ENCODE measurements at regions of chr3 and their contacts with region 1.

Region 1: DNA sequence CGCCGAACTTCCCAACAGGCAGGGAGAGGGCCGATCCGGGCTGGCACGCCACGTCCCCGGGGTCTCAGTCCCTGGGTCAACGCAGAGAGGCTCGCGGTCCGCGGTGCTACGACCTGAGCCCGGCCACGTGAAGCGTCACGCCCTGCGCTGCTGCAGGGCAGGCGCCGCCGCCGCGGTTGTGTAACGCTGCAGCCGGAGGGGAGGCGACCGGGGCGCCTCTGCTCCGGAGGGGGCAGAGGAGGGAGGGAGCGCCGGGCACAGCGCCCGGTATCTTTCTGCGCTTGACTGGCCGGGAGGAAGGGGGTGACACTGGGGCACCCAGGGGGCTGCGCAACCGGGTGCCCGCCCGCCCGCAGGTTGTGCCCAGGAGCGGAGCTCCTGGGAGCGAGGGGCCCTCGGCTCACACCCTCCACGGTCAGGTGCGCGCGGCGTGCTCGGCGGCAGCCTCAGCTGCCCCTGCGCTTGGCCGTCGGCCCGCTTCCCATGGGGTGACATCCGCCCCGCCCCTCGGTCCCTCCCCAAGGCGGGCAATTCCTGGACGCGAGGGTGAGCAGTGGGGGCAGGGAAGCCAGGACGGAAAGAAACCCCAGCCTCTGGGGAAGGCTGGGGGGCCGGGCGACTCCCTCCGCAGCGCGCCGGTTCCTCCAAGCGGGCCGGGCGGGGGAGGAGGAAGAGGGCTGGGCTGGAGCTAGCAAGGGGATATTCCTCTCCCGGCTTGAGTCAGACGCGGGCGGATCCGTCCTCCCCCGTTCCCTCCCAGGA is 852 bp upstream of the BHLHE40 start:
- DNase-seq: peak in 7 of 9 donors; percentile 29 to 66 (median 36)
- ATAC-seq: peak; percentile 65
- H3K4me3 ChIP-seq: peak overlapping the region; percentile 71
- H3K4me3 Mint-ChIP-seq: peak overlapping the region; percentile 86 to 100 (median 92)
- H3K27ac ChIP-seq: peak overlapping the region; percentile 59
- H3K27ac Mint-ChIP-seq: peak overlapping the region; percentile 52 to 100 (median 89)
- H3K4me1 ChIP-seq: peaks cover 17 to 38% of the 10 kb centered on the region in 2 donors
- H3K4me1 Mint-ChIP-seq: peaks cover 29 to 46% (median 42%) of the 10 kb centered on the region in 7 donors
- H3K27me3 ChIP-seq: no peaks in the 10 kb centered on the region
- H3K27me3 Mint-ChIP-seq: peaks cover 0 to 2% (median 0%) of the 10 kb centered on the region in 5 donors

Region 2: GRCh38 chr3:4466741-4467521 is 511.5 kb before region 1 on chr3 and contains the start of gene SUMF1:
- CTCF ChIA-PET with region 1: no interaction called
- POLR2A ChIA-PET with region 1: no interaction called
- intact Hi-C with region 1: no loop called
- DNase-seq: peak; percentile 59 to 79 (median 70)
- ATAC-seq: peak; percentile 98
- H3K4me3 ChIP-seq: peak within 1 kb of the TSS; percentile 90
- H3K4me3 Mint-ChIP-seq: peak within 1 kb of the TSS; percentile 90 to 95 (median 92)
- H3K27ac ChIP-seq: peak within 1 kb of the TSS; percentile 77
- H3K27ac Mint-ChIP-seq: peak within 1 kb of the TSS; percentile 86 to 96 (median 94)
- H3K4me1 ChIP-seq: peaks cover 5 to 7% of the 10 kb centered on the region in 2 donors
- H3K4me1 Mint-ChIP-seq: peaks cover 12 to 38% (median 21%) of the 10 kb centered on the region in 7 donors
- H3K27me3 ChIP-seq: no peaks in the 10 kb centered on the region
- H3K27me3 Mint-ChIP-seq: peaks cover 0 to 2% (median under 1%) of the 10 kb centered on the region in 5 donors
- total RNA-seq, gene SUMF1: 9.2 to 20.0 (median 16.0) TPM

Region 3: DNA sequence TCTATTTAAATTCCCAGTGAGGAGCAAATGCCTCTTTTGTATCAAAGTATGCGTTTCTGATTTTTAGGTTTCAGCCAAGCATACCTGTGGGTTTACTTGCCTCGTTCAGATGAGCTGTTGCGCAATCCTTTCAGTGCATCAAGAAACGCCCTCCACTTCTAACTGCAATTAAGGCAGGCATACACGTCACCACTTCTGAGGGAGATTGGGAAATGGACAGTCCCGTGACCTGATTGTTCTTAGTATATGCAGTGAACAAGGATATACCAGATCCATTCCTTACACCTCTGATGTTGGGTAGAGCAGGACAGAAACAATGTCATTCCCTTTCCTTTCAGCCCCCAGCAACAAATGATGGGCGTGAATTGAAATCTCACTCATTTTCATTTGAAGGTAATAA is 266.2 kb before region 1 on chr3:
- CTCF ChIA-PET with region 1: interaction called, 17 read pairs
- POLR2A ChIA-PET with region 1: no interaction called
- intact Hi-C with region 1: loop called (anchors 1 kb)
- DNase-seq: no peak
- ATAC-seq: no peak
- H3K4me3 ChIP-seq: no peak overlapping the region
- H3K4me3 Mint-ChIP-seq: no peak overlapping the region
- H3K27ac ChIP-seq: no peak overlapping the region
- H3K27ac Mint-ChIP-seq: no peak overlapping the region
- H3K4me1 ChIP-seq: no peaks in the 10 kb centered on the region
- H3K4me1 Mint-ChIP-seq: peaks cover 0 to 38% (median 0%) of the 10 kb centered on the region in 7 donors
- H3K27me3 ChIP-seq: no peaks in the 10 kb centered on the region
- H3K27me3 Mint-ChIP-seq: no peaks in the 10 kb centered on the region

Region 4: GRCh38 chr3:4776980-4777581 is 201.3 kb before region 1 on chr3:
- CTCF ChIA-PET with region 1: no interaction called
- POLR2A ChIA-PET with region 1: no interaction called
- intact Hi-C with region 1: loop called in 1 of 2 experiments (anchors 1 kb)
- DNase-seq: no peak
- ATAC-seq: no peak
- H3K4me3 ChIP-seq: no peak overlapping the region
- H3K4me3 Mint-ChIP-seq: peak overlapping the region in 1 of 10 donors; percentile 87
- H3K27ac ChIP-seq: no peak overlapping the region
- H3K27ac Mint-ChIP-seq: peak overlapping the region in 3 of 9 donors; percentile 11 to 98 (median 11)
- H3K4me1 ChIP-seq: no peaks in the 10 kb centered on the region
- H3K4me1 Mint-ChIP-seq: peaks cover 0 to 68% (median 4%) of the 10 kb centered on the region in 7 donors
- H3K27me3 ChIP-seq: no peaks in the 10 kb centered on the region
- H3K27me3 Mint-ChIP-seq: no peaks in the 10 kb centered on the region

Region 5: GRCh38 chr3:4845882-4846281 is 132.5 kb before region 1 on chr3:
- CTCF ChIA-PET with region 1: interaction called, 4 read pairs
- POLR2A ChIA-PET with region 1: interaction called, 4 read pairs
- intact Hi-C with region 1: loop called in 1 of 2 experiments (anchors 1 kb)
- DNase-seq: peak in 7 of 9 donors; percentile 43 to 76 (median 60)
- ATAC-seq: peak; percentile 87
- H3K4me3 ChIP-seq: no peak overlapping the region
- H3K4me3 Mint-ChIP-seq: peak overlapping the region in 9 of 10 donors; percentile 2 to 68 (median 46)
- H3K27ac ChIP-seq: peak overlapping the region; percentile 81
- H3K27ac Mint-ChIP-seq: peak overlapping the region; percentile 57 to 93 (median 76)
- H3K4me1 ChIP-seq: peaks cover 38 to 87% of the 10 kb centered on the region in 2 donors
- H3K4me1 Mint-ChIP-seq: peaks cover 39 to 99% (median 93%) of the 10 kb centered on the region in 7 donors
- H3K27me3 ChIP-seq: no peaks in the 10 kb centered on the region
- H3K27me3 Mint-ChIP-seq: no peaks in the 10 kb centered on the region

Region 6: DNA sequence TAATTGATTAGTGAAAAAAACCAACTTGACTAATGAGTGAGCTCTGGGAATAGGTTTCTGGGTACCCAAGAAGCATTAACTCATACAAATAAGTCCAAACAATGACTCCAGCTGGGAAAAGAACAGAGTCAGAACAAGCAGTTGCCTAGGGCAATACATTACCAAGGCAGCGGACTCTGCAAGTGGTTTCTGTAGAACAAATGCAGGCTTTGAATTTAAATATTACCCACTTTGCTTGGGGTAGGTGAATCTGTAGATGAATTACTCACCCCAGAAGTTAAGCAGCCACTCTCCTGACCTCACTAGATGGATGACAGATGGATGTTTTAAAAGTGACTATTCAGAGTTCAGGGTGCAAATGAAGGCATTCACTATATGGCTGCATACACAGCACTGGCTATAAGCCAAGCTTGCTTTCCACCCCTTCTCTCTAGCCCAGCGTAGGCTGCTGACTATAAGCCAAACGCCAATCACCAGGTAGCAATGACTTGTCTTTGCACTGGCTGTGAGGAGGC is 72.2 kb before region 1 on chr3:
- CTCF ChIA-PET with region 1: no interaction called
- POLR2A ChIA-PET with region 1: no interaction called
- intact Hi-C with region 1: loop called (anchors 1 to 5 kb)
- DNase-seq: no peak
- ATAC-seq: no peak
- H3K4me3 ChIP-seq: no peak overlapping the region
- H3K4me3 Mint-ChIP-seq: peak overlapping the region in 2 of 10 donors; percentile 29 to 38
- H3K27ac ChIP-seq: no peak overlapping the region
- H3K27ac Mint-ChIP-seq: peak overlapping the region in 4 of 9 donors; percentile 7 to 75 (median 38)
- H3K4me1 ChIP-seq: peaks cover 14 to 35% of the 10 kb centered on the region in 2 donors
- H3K4me1 Mint-ChIP-seq: peaks cover 33 to 85% (median 58%) of the 10 kb centered on the region in 7 donors
- H3K27me3 ChIP-seq: no peaks in the 10 kb centered on the region
- H3K27me3 Mint-ChIP-seq: no peaks in the 10 kb centered on the region

Region 7: DNA sequence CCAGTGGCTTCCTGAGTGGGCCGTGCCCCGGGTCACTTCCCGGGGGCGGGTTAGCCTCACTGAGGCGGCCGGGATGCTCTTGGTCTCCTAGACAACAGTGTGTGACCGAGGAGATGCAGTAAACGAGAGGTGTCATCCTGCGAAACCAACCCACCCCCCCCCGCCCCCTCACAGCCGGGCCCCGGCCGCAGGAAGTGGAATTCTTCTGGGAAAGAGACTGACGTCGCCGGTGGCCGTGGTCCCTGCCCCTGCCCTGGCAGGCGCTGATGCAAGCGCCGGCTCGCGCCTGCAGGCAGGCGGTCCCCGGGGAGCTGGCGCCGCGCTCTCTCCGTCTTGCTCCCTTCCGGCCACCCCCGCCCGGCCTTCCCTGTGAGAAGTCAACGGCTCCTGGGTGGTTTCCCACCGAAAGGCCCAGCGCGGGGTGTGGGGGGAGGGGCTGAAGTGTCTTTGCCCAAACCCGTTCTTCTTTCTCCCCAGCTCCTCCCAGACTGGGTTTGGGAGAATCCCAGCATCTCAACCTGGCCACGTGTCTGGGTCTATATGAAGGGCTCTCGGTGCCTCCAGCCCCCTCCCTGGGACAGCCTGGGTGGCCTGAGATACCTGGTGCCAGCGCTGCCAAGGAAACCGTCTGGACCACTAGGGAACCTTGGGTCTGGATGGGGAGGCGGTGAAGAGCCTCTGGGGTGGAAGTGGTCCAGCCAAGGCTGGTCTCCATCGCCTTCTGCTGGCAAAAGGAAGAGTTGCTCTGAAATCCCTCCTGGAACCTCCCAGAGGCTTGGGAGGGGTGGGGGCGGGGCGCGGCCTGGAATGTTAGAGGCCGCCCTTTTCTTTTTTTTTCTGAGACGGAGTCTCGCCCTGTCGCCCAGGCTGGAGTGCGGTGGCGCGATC is 48.2 kb after region 1 on chr3:
- CTCF ChIA-PET with region 1: interaction called, 6 read pairs
- POLR2A ChIA-PET with region 1: interaction called, 5 read pairs
- intact Hi-C with region 1: loop called in 1 of 2 experiments (anchors 1 kb)
- DNase-seq: peak; percentile 10 to 76 (median 32)
- ATAC-seq: peak; percentile 86
- H3K4me3 ChIP-seq: peak overlapping the region; percentile 70
- H3K4me3 Mint-ChIP-seq: peak overlapping the region; percentile 61 to 90 (median 81)
- H3K27ac ChIP-seq: peak overlapping the region; percentile 41
- H3K27ac Mint-ChIP-seq: peak overlapping the region in 3 of 9 donors; percentile 38 to 92 (median 43)
- H3K4me1 ChIP-seq: peaks cover 3 to 6% of the 10 kb centered on the region in 2 donors
- H3K4me1 Mint-ChIP-seq: peaks cover 0 to 55% (median 9%) of the 10 kb centered on the region in 7 donors
- H3K27me3 ChIP-seq: no peaks in the 10 kb centered on the region
- H3K27me3 Mint-ChIP-seq: peaks cover 0 to 2% (median 0%) of the 10 kb centered on the region in 5 donors

Region 8: GRCh38 chr3:5187156-5187919 is 209.0 kb after region 1 on chr3 and contains the start of gene EDEM1:
- CTCF ChIA-PET with region 1: no interaction called
- POLR2A ChIA-PET with region 1: interaction called, 3 read pairs
- intact Hi-C with region 1: loop called (anchors 1 to 2 kb)
- DNase-seq: peak; percentile 81 to 100 (median 88)
- ATAC-seq: peak; percentile 95
- H3K4me3 ChIP-seq: peak within 1 kb of the TSS; percentile 89
- H3K4me3 Mint-ChIP-seq: peak within 1 kb of the TSS; percentile 90 to 100 (median 98)
- H3K27ac ChIP-seq: peak within 1 kb of the TSS; percentile 97
- H3K27ac Mint-ChIP-seq: peak within 1 kb of the TSS; percentile 95 to 100 (median 98)
- H3K4me1 ChIP-seq: peaks cover 13 to 21% of the 10 kb centered on the region in 2 donors
- H3K4me1 Mint-ChIP-seq: peaks cover 14 to 41% (median 32%) of the 10 kb centered on the region in 7 donors
- H3K27me3 ChIP-seq: no peaks in the 10 kb centered on the region
- H3K27me3 Mint-ChIP-seq: no peaks in the 10 kb centered on the region
- total RNA-seq, gene EDEM1: 97.3 to 138 (median 126) TPM

Region 9: DNA sequence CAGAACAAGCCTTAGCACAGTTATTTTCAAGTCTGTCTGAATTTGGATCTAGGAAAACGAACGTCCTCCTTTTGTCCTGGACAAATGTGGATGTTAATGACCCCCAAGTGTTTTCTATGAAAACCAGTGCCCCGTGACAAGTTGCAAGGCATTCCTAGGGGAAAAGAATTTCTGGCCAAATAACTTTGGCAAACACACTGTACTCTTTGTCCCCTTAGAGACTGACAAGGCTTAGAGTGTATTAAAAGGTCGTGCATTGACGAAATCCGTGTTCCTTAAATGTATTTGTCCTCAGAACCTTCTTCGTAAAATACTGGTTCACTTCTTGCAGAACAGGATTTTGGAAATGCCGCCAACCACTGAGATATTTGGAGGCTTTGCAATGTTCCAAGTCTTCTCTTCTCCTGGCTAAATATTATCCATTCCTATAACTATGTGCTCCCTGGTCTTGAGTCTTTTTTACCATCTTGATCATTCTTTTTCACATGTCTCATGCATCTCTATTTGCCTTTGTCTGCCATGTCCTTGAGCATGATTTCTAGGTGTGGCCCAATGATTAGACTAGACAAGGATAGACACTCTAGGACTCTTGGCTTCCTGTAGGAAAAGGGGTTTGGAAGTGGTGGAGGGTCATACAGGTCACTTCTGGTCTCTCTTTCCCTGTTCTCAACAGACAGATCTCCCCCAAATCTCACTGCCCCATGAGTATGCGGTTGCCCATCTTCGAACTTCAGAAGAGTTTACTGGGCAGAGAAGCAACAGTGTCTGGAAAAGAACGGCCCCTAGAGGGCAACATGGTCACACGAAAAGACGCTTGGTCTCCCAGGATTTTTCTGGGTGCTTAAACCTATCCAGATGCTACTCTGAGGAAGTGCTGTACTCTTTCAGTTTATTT is 326.7 kb after region 1 on chr3:
- CTCF ChIA-PET with region 1: no interaction called
- POLR2A ChIA-PET with region 1: no interaction called
- intact Hi-C with region 1: no loop called
- DNase-seq: peak in 4 of 9 donors; percentile 6 to 22 (median 7)
- ATAC-seq: no peak
- H3K4me3 ChIP-seq: no peak overlapping the region
- H3K4me3 Mint-ChIP-seq: no peak overlapping the region
- H3K27ac ChIP-seq: no peak overlapping the region
- H3K27ac Mint-ChIP-seq: no peak overlapping the region
- H3K4me1 ChIP-seq: no peaks in the 10 kb centered on the region
- H3K4me1 Mint-ChIP-seq: no peaks in the 10 kb centered on the region
- H3K27me3 ChIP-seq: no peaks in the 10 kb centered on the region
- H3K27me3 Mint-ChIP-seq: peaks cover 0 to 5% (median 0%) of the 10 kb centered on the region in 5 donors